ENCODE measurements at regions of chr7 and their contacts with region 1.

Region 1: GRCh38 chr7:44581879-44582603 is at the start of gene TMED4:
- DNase-seq: peak; percentile 99
- H3K4me3 ChIP-seq: peak within 1 kb of the TSS; percentile 88
- H3K27ac ChIP-seq: peak within 1 kb of the TSS; percentile 92
- H3K4me1 ChIP-seq: peaks cover 6% of the 10 kb centered on the region
- H3K27me3 ChIP-seq: no peaks in the 10 kb centered on the region
- CTCF ChIP-seq: no peak
- total RNA-seq, gene TMED4: 77.6 and 79.5 TPM in 2 replicates

Region 2: GRCh38 chr7:44530990-44531389 is 51.1 kb before region 1 on chr7:
- CTCF ChIA-PET with region 1: no interaction called
- POLR2A ChIA-PET with region 1: no interaction called
- intact Hi-C with region 1: no loop called
- DNase-seq: no peak
- H3K4me3 ChIP-seq: no peak overlapping the region
- H3K27ac ChIP-seq: no peak overlapping the region
- H3K4me1 ChIP-seq: no peaks in the 10 kb centered on the region
- H3K27me3 ChIP-seq: no peaks in the 10 kb centered on the region
- CTCF ChIP-seq: no peak

Region 3: GRCh38 chr7:44606450-44607254 is 24.6 kb after region 1 on chr7 and contains the start of gene OGDH:
- CTCF ChIA-PET with region 1: no interaction called
- POLR2A ChIA-PET with region 1: no interaction called
- intact Hi-C with region 1: loop called (anchors 2 kb)
- DNase-seq: peak; percentile 99
- H3K4me3 ChIP-seq: peak within 1 kb of the TSS; percentile 59
- H3K27ac ChIP-seq: peak within 1 kb of the TSS; percentile 86
- H3K4me1 ChIP-seq: peaks cover 6% of the 10 kb centered on the region
- H3K27me3 ChIP-seq: no peaks in the 10 kb centered on the region
- CTCF ChIP-seq: no peak
- total RNA-seq, gene OGDH: 111 and 113 TPM in 2 replicates

Region 4: DNA sequence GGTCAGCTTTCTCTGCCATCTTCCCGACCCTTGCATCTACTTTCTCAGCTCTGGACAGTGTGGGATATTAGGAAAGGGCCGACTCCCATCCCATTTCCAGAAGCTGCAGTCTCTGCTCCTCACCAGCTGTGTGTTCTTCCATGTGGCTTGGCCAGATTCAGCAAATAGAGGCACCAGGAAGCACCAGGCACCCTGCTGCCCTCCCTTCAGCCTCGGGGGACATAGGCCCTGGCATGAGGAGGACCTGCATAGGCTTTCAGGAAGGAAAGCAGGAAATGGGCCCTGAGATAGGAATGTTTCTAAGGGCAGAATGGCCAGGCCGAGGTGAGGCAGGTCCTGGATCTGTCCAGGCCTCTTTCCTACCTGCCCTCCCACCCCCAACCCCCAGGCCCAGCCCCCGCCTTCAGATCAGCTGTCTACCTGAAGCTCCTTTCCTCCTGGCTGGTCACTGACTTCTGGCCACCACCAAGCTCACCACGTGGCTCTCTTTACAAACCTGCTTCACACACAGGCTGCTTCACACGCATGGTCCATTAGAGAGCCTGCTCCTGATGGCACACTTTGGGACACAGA is 330.8 kb after region 1 on chr7:
- CTCF ChIA-PET with region 1: no interaction called
- POLR2A ChIA-PET with region 1: no interaction called
- intact Hi-C with region 1: no loop called
- DNase-seq: no peak
- H3K4me3 ChIP-seq: no peak overlapping the region
- H3K27ac ChIP-seq: no peak overlapping the region
- H3K4me1 ChIP-seq: no peaks in the 10 kb centered on the region
- H3K27me3 ChIP-seq: no peaks in the 10 kb centered on the region
- CTCF ChIP-seq: no peak

Region 5: DNA sequence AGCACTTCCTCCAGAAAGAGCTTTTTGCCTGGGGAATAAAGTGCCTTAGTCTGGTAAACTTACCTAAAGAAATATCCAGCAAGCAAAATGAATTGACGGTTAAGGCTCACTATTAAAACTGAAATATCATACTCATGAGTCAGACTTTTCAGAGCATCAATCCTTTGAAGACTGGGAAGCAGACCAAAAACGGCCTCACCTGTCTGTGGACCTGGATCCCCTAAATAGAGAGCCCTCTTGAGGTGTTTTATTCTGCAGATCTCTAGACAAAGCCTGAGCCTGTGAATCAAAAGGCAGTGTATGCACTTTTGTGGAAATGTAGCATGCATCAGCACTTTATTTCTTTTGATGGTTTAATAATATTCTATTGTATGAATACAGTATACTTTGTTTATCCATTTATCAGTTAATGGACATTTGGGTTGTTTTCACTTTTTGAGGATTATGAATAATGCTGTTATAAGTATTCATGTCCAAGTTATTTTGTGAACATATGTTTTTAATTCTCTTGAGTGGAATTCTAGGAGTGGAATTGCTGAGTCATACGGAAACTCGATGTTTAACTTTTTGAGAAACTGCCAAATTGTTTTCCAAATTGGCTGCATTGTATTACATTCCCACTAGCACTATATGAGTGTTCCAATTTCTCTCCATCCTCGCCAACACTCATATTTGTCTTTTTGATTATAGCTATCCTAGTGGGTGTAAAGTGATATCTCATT is 1788.1 kb after region 1 on chr7:
- CTCF ChIA-PET with region 1: no interaction called
- POLR2A ChIA-PET with region 1: interaction called, 13 read pairs
- intact Hi-C with region 1: no loop called
- DNase-seq: peak; percentile 32
- H3K4me3 ChIP-seq: no peak overlapping the region
- H3K27ac ChIP-seq: no peak overlapping the region
- H3K4me1 ChIP-seq: no peaks in the 10 kb centered on the region
- H3K27me3 ChIP-seq: no peaks in the 10 kb centered on the region
- CTCF ChIP-seq: no peak